ENCODE measurements at regions of chr19 and their contacts with region 1.

Region 1: GRCh38 chr19:4197625-4198466 is 15.4 kb downstream of the ANKRD24 start:
- DNase-seq: no peak
- H3K4me3 ChIP-seq: no peak overlapping the region
- CTCF ChIP-seq: no peak

Region 2: DNA sequence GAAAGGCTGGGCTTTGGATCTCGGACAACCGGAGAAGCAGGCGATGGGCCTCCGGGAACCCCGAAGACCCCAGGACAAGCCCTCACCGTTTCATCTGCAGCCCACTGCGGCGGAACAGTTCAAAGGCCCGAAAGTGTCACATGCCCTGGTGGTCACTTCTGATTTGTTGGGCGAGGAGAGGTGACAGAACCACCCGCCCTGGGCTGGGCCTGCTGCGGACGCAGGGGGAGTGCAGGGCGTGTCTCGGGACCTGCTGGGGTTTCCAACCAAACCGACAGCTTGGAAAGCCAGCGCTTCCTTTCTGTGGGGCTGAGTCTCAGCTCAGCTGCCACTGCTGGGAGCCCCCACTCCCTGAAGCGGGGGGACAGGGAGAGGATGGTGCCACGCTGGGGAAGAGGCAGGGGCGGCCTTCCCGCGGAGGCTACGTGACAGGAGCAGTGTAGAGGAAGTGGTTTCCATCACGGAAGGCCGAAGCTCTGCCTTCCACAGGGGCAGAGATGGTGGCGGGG is 108.4 kb before region 1 on chr19:
- CTCF ChIA-PET with region 1: no interaction called
- POLR2A ChIA-PET with region 1: no interaction called
- DNase-seq: no peak
- H3K4me3 ChIP-seq: no peak overlapping the region
- CTCF ChIP-seq: no peak

Region 3: GRCh38 chr19:4186087-4186993 is 11.5 kb before region 1 on chr19:
- CTCF ChIA-PET with region 1: interaction called, 37 read pairs
- POLR2A ChIA-PET with region 1: no interaction called
- DNase-seq: no peak
- H3K4me3 ChIP-seq: no peak overlapping the region
- CTCF ChIP-seq: peak; percentile 85

Measured in AG04449 (cell line).